PC-9 (cell line): ENCODE measurements at regions of chr9 and their contacts with region 1.

Region 1: DNA sequence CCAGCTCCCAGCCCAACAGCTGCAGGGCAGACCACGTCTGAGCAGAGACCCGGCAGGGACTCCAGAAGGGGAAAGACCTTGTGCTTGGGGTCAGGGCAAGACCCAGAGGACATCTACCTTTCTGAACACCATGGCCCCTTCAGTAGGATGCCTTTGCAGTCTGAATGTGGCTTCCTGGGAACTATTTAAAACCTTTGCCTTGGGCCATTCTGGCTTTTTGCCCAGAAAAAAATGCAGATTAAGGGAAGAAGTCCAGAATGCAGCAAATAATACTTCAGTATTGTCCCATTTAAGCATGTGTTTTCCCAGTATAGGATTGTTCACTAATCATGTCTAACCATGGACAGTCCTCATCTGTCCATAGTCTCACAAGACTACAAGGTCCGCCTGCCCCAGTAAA is 67.5 kb upstream of the ERCC6L2 start:
- DNase-seq: peak in 1 of 2 experiments; percentile 49
- H3K4me3 ChIP-seq: no peak overlapping the region
- H3K27ac ChIP-seq: no peak overlapping the region
- H3K4me1 ChIP-seq: no peaks in the 10 kb centered on the region
- H3K27me3 ChIP-seq: 0 out of 2 replicates have a peak, but pooled peaks cover 4% of the 10 kb centered on the region
- CTCF ChIP-seq: no peak

Region 2: GRCh38 chr9:94980947-94981722 is 826.9 kb before region 1 on chr9:
- CTCF ChIA-PET with region 1: no interaction called
- POLR2A ChIA-PET with region 1: no interaction called
- intact Hi-C with region 1: no loop called
- DNase-seq: no peak
- H3K4me3 ChIP-seq: no peak overlapping the region
- H3K27ac ChIP-seq: no peak overlapping the region
- H3K4me1 ChIP-seq: no peaks in the 10 kb centered on the region
- H3K27me3 ChIP-seq: no peaks in the 10 kb centered on the region
- CTCF ChIP-seq: no peak

Region 3: DNA sequence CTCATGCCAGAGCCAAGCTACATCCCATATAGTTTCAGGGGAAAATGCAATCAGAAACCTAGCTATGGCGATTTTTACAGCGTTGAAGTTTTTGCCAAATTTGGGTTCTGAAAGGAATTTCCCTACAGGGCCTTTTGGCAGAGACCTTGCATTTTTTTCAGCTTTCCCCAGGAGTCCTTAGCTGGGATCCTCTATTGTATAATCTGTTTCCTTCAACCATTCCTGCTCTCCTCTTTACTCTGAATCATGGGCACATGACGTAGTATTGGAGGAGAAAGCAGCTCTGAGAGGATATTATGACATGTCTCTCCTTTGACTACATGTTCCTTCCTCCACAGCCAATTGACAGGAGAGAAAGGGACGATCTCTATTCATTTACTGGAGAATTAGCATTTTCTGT is 51.0 kb before region 1 on chr9:
- CTCF ChIA-PET with region 1: no interaction called
- POLR2A ChIA-PET with region 1: no interaction called
- intact Hi-C with region 1: no loop called
- DNase-seq: no peak
- H3K4me3 ChIP-seq: no peak overlapping the region
- H3K27ac ChIP-seq: no peak overlapping the region
- H3K4me1 ChIP-seq: no peaks in the 10 kb centered on the region
- H3K27me3 ChIP-seq: peaks cover 9% of the 10 kb centered on the region; the same call in 1 of the 2 replicates
- CTCF ChIP-seq: no peak

Region 4: GRCh38 chr9:95857122-95857521 is 49.1 kb after region 1 on chr9:
- CTCF ChIA-PET with region 1: no interaction called
- POLR2A ChIA-PET with region 1: no interaction called
- intact Hi-C with region 1: loop called (anchors 5 kb)
- DNase-seq: peak; percentile 87 to 95
- H3K4me3 ChIP-seq: no peak overlapping the region
- H3K27ac ChIP-seq: peak overlapping the region; percentile 35; the same call in 1 of the 2 replicates
- H3K4me1 ChIP-seq: peaks cover 55% of the 10 kb centered on the region
- H3K27me3 ChIP-seq: no peaks in the 10 kb centered on the region
- CTCF ChIP-seq: no peak